ENCODE measurements at regions of chr1 and their contacts with region 1.

Region 1: GRCh38 chr1:165597883-165598675 is 33.0 kb upstream of the MGST3 start:
- DNase-seq: peak; percentile 98
- H3K4me3 Mint-ChIP-seq: peak overlapping the region; percentile 91
- H3K27ac Mint-ChIP-seq: peak overlapping the region; percentile 80
- H3K4me1 Mint-ChIP-seq: peaks cover 28% of the 10 kb centered on the region
- H3K27me3 Mint-ChIP-seq: peaks cover 42% of the 10 kb centered on the region

Region 2: DNA sequence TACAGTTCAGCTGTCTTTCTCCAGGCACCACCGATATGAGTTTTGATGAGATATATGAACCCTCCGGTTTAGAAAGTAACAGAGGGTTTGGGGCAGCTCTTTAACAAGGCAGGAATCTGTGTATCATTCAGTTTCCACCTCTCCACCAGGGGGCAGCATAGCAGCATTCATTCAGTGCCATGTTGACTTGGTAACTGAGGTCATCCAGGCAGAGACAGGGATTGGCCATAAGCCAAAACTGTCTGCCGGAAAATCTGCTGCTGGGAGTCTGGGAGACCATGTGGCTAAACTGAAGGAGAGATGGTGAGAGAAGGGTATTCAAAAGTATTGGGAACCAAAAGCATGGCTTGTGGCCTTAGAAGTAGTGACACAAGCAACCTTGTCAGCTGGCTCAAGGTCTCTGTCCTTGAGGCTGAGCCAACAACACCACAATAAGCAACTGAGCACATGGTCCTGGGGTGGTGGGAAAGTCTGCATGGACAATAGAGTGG is 340.1 kb before region 1 on chr1:
- intact Hi-C with region 1: loop called (anchors 5 kb)
- DNase-seq: peak; percentile 80
- H3K4me3 Mint-ChIP-seq: no peak overlapping the region
- H3K27ac Mint-ChIP-seq: no peak overlapping the region
- H3K4me1 Mint-ChIP-seq: no peaks in the 10 kb centered on the region
- H3K27me3 Mint-ChIP-seq: no peaks in the 10 kb centered on the region

Region 3: GRCh38 chr1:165403835-165404482 is 194.1 kb before region 1 on chr1:
- intact Hi-C with region 1: loop called (anchors 1 kb)
- DNase-seq: peak; percentile 83
- H3K4me3 Mint-ChIP-seq: no peak overlapping the region
- H3K27ac Mint-ChIP-seq: no peak overlapping the region
- H3K4me1 Mint-ChIP-seq: peaks cover 2% of the 10 kb centered on the region
- H3K27me3 Mint-ChIP-seq: peaks cover 44% of the 10 kb centered on the region

Region 4: DNA sequence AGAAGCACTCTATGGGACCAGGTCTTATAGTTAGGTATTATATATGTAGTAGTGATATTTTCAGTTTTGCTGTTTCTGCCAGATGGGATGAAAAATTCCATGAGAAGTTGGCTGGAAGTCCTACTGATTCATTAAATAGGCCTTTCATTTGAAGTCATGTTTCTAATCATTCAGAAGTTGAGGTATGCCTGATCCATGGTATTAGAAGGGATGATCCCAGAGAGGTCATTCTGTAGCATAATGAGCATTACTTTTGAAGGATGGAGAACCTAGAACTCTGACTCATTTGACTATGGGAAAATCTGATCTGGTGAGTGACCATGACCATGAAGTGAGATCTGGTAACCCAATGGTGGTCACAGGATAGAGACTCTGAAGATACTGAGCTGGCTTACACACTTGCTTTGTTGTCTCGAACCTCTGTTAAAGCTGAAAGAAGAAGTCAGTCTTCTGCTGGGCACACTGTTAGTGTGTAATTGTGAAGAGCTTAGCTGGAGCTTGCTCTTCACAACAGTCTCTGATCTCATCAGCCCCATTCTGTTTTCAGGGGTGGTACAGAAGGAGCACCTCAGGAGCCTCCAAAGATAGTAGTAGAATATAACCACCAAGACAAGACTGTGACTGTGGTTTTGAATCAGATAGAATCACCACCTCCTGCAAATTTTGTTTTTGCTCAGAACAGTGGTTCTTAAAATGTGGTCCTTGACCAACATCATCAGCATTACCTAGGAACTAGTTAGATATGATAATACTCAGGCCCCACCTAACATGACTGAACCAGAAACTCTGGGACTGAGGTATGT is 41.9 kb after region 1 on chr1:
- intact Hi-C with region 1: loop called (anchors 5 kb)
- DNase-seq: no peak
- H3K4me3 Mint-ChIP-seq: no peak overlapping the region
- H3K27ac Mint-ChIP-seq: peak overlapping the region; percentile 27
- H3K4me1 Mint-ChIP-seq: peaks cover 12% of the 10 kb centered on the region
- H3K27me3 Mint-ChIP-seq: no peaks in the 10 kb centered on the region

Region 5: DNA sequence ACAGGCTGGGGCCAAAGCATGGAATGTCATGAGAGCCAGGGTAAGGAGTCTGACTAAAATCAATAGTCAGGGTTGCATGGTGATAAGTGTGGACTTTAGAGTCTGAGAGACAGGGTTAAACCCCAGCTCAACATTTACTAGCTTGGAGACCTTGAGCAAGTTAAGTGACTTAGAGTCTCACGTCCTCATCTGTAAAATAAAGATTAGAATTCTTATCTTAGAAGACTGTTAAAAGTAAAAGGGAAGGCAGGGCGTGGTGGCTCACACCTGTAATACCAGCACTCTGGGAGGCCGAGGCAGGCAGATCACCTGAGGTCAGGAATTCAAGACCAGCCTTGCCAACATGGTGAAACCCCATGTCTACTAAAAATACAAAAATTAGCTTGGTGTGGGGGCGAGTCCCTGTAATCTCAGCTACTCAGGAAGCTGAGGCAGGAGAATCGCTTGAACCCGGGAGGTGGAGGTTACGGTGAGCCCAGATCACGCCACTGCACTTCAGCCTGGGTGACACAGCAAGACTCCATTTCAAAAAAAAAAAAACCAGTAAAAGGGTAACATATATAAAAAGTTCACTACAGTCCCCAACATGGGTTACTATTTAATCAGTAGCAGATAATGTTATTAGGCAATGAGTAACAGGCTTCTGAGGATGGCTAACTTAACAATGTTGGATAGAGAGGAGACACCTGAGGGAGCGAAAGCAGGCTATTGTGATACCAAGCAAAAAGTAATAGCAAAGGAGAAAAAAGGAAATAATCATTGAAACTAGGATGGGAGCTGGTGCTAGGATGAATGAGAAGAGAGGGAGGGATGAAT is 149.8 kb after region 1 on chr1:
- intact Hi-C with region 1: no loop called
- DNase-seq: no peak
- H3K4me3 Mint-ChIP-seq: no peak overlapping the region
- H3K27ac Mint-ChIP-seq: no peak overlapping the region
- H3K4me1 Mint-ChIP-seq: peaks cover 5% of the 10 kb centered on the region
- H3K27me3 Mint-ChIP-seq: no peaks in the 10 kb centered on the region

Region 6: DNA sequence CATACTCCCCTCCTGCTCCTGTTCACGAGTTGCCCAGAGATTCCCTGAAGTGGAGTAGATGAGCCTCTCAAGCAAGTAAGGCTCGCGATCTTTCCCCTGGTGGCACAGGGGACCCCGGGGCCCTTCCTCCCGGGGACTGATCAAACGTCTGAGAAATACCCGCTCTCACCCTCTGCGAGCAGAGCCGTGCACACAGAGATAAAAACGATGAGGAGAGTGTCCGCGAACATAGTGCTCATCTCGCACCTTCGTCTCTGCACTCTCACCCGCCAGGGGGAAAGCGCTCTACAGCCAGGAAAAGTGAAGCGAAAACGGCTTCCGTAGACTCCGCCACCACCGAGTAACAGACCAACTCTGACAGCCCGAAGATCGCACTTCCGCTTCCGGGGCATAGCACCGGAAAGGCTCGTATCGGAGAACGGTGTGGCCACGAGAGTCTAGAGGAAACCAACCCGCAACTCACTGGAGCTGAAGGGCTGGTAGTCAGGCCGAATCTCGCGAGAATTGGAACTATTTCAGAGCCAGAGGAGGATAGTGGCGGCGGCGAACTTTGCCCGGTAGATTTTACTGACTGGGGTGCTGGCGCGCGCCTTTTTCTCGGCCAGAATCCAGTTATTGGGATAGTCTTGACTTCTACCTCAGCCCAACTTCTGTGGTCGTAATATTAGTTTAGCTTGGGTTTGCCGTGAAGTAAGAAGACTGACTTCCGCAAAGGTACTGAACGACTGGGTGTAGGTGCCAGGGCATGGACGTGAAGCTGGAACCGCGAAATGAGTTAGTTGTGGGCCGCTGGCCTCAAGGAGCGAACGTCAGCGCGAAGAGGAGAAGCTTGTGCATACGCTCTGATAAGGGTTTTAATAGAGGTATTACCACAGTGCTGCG is 170.7 kb after region 1 on chr1 and contains the start of gene TMCO1:
- intact Hi-C with region 1: loop called (anchors 1 kb)
- DNase-seq: peak; percentile 98
- H3K4me3 Mint-ChIP-seq: peak within 1 kb of the TSS; percentile 98
- H3K27ac Mint-ChIP-seq: peak within 1 kb of the TSS; percentile 100
- H3K4me1 Mint-ChIP-seq: peaks cover 41% of the 10 kb centered on the region
- H3K27me3 Mint-ChIP-seq: no peaks in the 10 kb centered on the region
- total RNA-seq, gene TMCO1: 91.8 and 94.3 TPM in 2 replicates

Region 7: DNA sequence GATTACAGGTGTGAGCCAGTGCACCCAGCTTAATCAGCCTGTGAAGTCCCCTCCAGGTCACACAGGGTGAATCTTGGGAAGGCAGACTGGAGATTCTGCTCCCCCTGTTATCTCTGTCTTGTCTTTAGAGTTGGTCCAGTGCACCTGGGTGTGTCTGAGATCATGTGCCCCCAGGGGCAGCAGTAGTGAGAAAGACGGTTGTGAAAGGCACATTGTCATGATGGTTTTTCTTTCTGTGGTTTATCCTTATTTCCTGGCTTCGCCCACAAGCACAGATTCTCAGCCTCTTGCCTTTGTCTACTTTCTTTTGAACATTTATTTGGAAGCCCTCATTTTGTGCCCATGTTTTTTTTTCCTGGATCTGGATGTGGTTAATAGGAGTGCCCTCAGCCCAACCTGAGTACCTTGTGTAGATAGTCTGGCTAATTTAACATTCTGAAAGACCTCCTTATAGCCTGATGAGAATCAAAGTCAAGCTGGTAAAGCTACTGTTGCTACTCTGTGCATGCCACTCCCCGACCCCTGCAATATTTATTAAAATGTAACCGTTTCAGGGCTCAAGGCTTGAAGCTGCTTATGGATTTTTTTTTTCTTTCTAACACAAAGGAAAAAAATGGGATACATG is 253.1 kb after region 1 on chr1:
- intact Hi-C with region 1: no loop called
- DNase-seq: peak; percentile 72
- H3K4me3 Mint-ChIP-seq: peak overlapping the region; percentile 21
- H3K27ac Mint-ChIP-seq: no peak overlapping the region
- H3K4me1 Mint-ChIP-seq: peaks cover 53% of the 10 kb centered on the region
- H3K27me3 Mint-ChIP-seq: no peaks in the 10 kb centered on the region

Region 8: DNA sequence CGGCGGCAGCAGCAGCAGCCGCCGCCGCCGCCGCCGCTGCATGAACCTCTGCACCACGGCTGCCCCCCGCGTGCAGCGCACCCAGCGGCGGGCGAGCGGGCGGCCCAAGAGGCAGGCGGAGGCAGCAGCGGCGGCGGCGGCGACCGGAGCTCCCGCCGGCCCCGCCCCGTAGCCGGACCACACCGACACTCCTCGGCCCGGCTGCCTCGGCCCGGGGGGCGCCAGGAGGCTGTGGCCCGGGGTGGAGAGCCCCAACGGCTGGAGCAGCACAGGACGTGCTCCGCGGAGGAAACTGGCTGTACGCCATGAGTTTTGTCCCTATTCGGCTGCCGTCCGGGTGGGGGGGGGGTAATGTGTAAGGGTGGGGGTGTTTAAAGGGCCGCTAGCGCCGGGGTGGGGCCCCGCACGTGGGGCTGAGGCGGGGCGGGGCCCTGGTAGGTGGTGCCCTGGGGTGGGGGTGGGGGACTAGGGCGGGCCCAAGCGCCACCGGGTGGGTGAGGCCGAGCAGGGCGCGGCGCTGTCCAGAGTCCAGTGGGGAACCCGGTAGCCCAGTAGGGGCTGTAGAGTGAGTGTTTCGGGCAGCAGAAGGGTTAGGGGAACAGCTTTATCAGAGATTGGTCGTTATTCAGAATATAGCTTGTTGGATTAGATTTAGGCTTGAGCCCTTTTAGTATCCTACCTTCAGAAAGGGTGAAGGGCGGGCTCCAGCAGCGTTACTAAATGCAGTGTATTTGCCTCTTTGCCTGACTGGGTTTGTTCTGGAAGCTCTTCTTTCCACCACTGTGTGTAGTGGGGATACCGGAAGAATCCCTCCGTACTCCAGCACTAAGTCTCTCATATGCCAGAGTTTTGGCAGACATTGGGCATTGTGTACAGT is 568.9 kb after region 1 on chr1 and contains the start of gene FAM78B:
- intact Hi-C with region 1: loop called (anchors 10 kb)
- DNase-seq: peak; percentile 84
- H3K4me3 Mint-ChIP-seq: peak within 1 kb of the TSS; percentile 83
- H3K27ac Mint-ChIP-seq: peak within 1 kb of the TSS; percentile 50
- H3K4me1 Mint-ChIP-seq: peaks cover 21% of the 10 kb centered on the region
- H3K27me3 Mint-ChIP-seq: peaks cover 54% of the 10 kb centered on the region
- total RNA-seq, gene FAM78B: 1.6 and 1.9 TPM in 2 replicates